CD4-positive, alpha-beta T cell (primary cell): ENCODE measurements at regions of chr12 and their contacts with region 1.

Region 1: DNA sequence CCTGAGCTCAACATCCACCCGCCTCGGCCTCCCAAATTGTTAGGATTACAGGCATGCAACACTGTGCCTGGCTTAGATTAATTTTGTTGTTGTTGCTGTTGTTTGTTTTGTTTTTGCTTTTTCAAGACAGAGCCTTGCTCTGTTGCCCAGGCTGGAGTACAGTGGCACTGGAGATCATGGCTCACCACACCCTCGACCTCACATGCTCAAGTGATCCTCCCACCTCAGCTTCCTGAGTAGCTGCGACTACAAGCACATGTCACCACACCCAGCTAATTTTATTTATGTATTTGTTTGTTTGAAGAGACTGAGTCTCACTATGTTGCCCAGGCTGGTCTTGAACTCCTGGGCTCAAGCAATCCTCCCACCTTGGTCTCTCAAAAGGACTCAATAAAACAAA is 26.7 kb downstream of the CRY1 start:
- DNase-seq: peak in 1 of 14 experiments; percentile 13
- ATAC-seq: no peak
- H3K4me3 ChIP-seq: no peak overlapping the region
- H3K4me3 Mint-ChIP-seq: no peak overlapping the region
- H3K27ac ChIP-seq: no peak overlapping the region
- H3K27ac Mint-ChIP-seq: no peak overlapping the region
- H3K4me1 ChIP-seq: peaks cover 5% of the 10 kb centered on the region
- H3K4me1 Mint-ChIP-seq: peaks cover 19% of the 10 kb centered on the region
- H3K27me3 ChIP-seq: no peaks in the 10 kb centered on the region
- H3K27me3 Mint-ChIP-seq: no peaks in the 10 kb centered on the region
- CTCF ChIP-seq: no peak

Region 2: DNA sequence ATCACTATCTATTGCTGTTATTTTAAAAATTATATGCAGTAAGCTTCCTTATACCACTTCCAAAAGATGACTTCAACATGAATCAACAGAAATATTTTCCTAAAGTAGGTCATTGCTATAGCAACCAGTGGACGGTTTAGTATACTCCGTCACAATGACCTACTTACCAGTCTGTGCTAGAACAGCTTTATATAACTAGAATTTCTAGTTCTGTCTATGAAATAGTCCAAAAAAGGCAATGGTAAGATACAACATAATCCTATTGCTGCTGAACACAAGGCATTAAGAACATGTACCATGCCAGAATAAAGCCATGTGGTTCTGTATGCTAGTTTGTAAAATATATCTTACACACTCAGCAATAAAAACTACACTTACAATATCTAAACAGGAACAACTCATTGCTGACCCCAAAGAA is 39.0 kb before region 1 on chr12:
- CTCF ChIA-PET with region 1: no interaction called
- POLR2A ChIA-PET with region 1: no interaction called
- intact Hi-C with region 1: loop called in 1 of 2 experiments (anchors 5 kb)
- DNase-seq: peak in 3 of 14 experiments; percentile 84 to 91 (median 90)
- ATAC-seq: peak; percentile 93
- H3K4me3 ChIP-seq: no peak overlapping the region
- H3K4me3 Mint-ChIP-seq: peak overlapping the region; percentile 36
- H3K27ac ChIP-seq: peak overlapping the region; percentile 66 to 82
- H3K27ac Mint-ChIP-seq: peak overlapping the region; percentile 86
- H3K4me1 ChIP-seq: peaks cover 13% of the 10 kb centered on the region
- H3K4me1 Mint-ChIP-seq: peaks cover 70% of the 10 kb centered on the region
- H3K27me3 ChIP-seq: no peaks in the 10 kb centered on the region
- H3K27me3 Mint-ChIP-seq: no peaks in the 10 kb centered on the region
- CTCF ChIP-seq: no peak